Calu3 (cell line): ENCODE measurements at regions of chr3 and their contacts with region 1.

Region 1: DNA sequence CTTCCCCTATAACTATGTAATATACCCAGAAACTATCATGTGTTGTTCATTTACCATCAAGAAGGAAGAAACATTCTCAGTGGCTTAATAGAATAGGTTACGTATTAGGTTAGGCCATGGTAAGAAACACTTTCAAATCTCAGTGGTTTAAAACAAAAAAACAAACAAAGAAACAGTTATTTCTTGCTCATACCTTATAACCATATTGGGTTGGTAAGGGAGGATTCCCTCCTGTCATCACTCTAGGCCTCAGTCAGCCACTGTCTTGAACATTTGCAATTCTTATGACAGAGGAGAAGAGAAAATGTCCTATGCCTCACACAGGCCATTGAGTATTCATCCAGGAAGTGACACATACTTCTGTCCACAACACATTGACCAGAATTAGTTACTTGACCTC is 727.7 kb upstream of the NECTIN3 start:
- DNase-seq: peak; percentile 3
- H3K4me3 Mint-ChIP-seq: peak overlapping the region; percentile 14
- H3K27ac Mint-ChIP-seq: peak overlapping the region; percentile 91
- H3K4me1 Mint-ChIP-seq: peaks cover 49% of the 10 kb centered on the region
- H3K27me3 Mint-ChIP-seq: no peaks in the 10 kb centered on the region
- CTCF ChIP-seq: no peak

Region 2: DNA sequence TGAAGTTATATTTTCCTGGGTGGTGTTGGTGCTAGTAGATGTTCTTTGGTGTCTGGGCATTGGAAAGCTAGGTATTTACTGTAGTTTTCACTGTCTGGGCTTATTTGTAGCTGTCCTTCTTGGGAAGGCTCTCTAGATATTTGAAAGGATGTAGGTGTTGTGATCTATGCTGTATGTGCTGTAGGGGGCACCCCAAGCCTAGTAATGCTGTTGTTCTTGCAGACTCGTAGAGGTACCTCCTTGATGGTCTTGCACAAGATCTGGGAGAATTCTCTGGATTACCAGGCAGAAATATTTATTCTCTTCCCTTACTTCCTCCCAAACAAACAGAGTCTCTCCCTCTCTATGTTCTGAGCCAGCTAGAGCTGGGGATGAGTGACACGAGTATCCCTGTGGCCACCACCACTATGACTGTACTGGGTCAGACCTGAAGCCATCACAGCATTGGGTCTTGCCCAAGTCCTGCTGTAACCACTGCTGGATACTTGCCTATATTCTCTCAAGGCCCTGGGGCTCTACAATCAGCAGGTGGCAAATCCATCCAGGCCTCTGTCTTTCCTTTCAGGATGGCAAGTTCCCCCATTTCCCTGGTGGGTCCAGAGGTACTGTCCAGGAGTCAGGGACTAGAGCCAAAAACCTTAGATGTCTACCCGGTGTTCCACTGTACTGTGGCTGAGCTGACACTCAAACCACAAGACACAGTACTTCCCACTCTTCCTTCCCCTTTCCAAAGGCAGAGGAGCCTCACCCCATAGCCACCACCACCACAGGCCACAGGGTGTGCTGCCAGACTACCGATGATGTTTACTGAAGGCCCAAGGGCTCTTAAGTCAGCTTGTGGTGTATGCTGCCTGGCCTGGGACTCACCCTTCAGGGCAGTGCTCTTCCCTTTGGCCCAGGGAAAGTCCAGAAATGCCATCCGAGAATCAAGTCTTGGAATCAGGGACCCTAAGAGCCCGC is 811.4 kb before region 1 on chr3:
- CTCF ChIA-PET with region 1: no interaction called
- intact Hi-C with region 1: loop called (anchors 10 kb)
- DNase-seq: peak; percentile 84
- H3K4me3 Mint-ChIP-seq: no peak overlapping the region
- H3K27ac Mint-ChIP-seq: peak overlapping the region; percentile 4
- H3K4me1 Mint-ChIP-seq: peaks cover 15% of the 10 kb centered on the region
- H3K27me3 Mint-ChIP-seq: no peaks in the 10 kb centered on the region
- CTCF ChIP-seq: peak; percentile 21

Region 3: DNA sequence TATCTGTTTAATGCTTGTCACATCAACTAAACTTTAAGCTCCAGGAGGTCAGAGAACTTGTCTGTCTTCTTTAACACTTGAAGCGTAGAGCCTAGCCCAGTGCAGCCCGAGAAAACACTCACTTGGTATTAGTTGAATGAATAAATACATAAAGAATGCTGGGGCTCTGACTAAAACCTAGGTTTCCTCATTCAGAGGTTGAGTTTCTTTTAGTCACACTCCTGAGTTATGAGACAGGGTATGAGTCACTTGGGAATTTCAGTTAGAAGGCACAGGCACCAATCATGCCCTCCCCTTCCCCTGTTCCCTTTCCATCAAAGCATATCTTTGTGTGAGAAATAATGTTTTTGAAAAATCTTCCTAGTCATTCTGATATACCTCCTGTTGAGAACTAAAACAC is 416.8 kb before region 1 on chr3:
- CTCF ChIA-PET with region 1: no interaction called
- intact Hi-C with region 1: loop called (anchors 2 kb)
- DNase-seq: peak; percentile 58
- H3K4me3 Mint-ChIP-seq: no peak overlapping the region
- H3K27ac Mint-ChIP-seq: peak overlapping the region; percentile 97
- H3K4me1 Mint-ChIP-seq: peaks cover 80% of the 10 kb centered on the region
- H3K27me3 Mint-ChIP-seq: no peaks in the 10 kb centered on the region
- CTCF ChIP-seq: no peak

Region 4: GRCh38 chr3:110405830-110406585 is 62.1 kb after region 1 on chr3:
- CTCF ChIA-PET with region 1: no interaction called
- intact Hi-C with region 1: no loop called
- DNase-seq: no peak
- H3K4me3 Mint-ChIP-seq: no peak overlapping the region
- H3K27ac Mint-ChIP-seq: no peak overlapping the region
- H3K4me1 Mint-ChIP-seq: peaks cover 7% of the 10 kb centered on the region
- H3K27me3 Mint-ChIP-seq: no peaks in the 10 kb centered on the region
- CTCF ChIP-seq: no peak

Region 5: GRCh38 chr3:110576962-110577361 is 233.0 kb after region 1 on chr3:
- CTCF ChIA-PET with region 1: no interaction called
- intact Hi-C with region 1: loop called (anchors 10 kb)
- DNase-seq: peak; percentile 51
- H3K4me3 Mint-ChIP-seq: no peak overlapping the region
- H3K27ac Mint-ChIP-seq: peak overlapping the region; percentile 87
- H3K4me1 Mint-ChIP-seq: peaks cover 43% of the 10 kb centered on the region
- H3K27me3 Mint-ChIP-seq: no peaks in the 10 kb centered on the region
- CTCF ChIP-seq: no peak

Region 6: GRCh38 chr3:110697961-110698360 is 354.0 kb after region 1 on chr3:
- CTCF ChIA-PET with region 1: no interaction called
- intact Hi-C with region 1: no loop called
- DNase-seq: no peak
- H3K4me3 Mint-ChIP-seq: no peak overlapping the region
- H3K27ac Mint-ChIP-seq: peak overlapping the region; percentile 6
- H3K4me1 Mint-ChIP-seq: peaks cover 10% of the 10 kb centered on the region
- H3K27me3 Mint-ChIP-seq: no peaks in the 10 kb centered on the region
- CTCF ChIP-seq: no peak

Region 7: DNA sequence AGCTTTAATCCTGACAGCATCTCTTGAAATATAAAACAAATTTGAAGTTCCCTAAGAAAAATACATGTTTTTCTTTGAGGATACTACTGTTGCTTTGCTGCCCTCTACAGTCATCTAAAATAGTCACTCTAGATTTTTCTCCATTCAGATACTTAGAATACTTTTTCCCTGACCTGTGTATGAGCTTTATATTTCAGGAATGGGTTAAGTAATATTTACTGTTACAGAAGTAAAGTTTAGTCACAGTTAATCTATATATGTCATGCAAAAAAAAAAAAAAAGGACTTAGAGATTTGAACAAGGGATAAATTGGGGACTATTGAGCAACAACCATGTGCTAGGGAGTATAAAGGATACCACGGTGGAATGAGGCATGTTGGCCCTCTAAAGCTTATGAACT is 736.5 kb after region 1 on chr3:
- CTCF ChIA-PET with region 1: no interaction called
- intact Hi-C with region 1: loop called (anchors 5 kb)
- DNase-seq: no peak
- H3K4me3 Mint-ChIP-seq: no peak overlapping the region
- H3K27ac Mint-ChIP-seq: no peak overlapping the region
- H3K4me1 Mint-ChIP-seq: peaks cover 6% of the 10 kb centered on the region
- H3K27me3 Mint-ChIP-seq: no peaks in the 10 kb centered on the region
- CTCF ChIP-seq: peak; percentile 49